ENCODE measurements at regions of chr6 and their contacts with region 1.

Region 1: DNA sequence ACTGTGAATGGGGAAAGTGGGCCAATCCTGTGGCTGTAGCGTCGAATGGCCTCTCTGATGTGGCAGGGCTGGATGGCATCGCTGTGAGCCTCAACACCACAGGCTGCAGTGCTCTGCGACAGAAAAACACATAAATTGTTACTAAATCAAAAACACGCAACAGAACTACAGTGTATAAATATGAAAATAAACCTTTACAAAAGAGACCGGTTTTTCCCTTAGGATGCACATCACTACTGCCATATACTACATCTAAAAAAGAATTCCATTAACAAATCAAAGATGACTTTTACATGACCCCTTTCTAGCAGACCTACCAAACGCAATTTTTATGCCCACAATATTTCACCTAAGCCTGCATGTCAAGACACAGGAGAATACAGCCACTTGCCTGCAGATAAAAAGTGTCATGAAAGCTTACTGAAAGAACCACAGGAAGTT is 395.5 kb upstream of the RUNX2 start:
- DNase-seq: no peak
- H3K4me3 Mint-ChIP-seq: peak overlapping the region; percentile 78
- H3K27ac Mint-ChIP-seq: peak overlapping the region; percentile 93
- H3K4me1 Mint-ChIP-seq: peaks cover 48% of the 10 kb centered on the region
- H3K27me3 Mint-ChIP-seq: no peaks in the 10 kb centered on the region

Region 2: GRCh38 chr6:44655412-44656342 is 277.0 kb before region 1 on chr6:
- intact Hi-C with region 1: loop called (anchors 10 kb)
- DNase-seq: peak; percentile 55
- H3K4me3 Mint-ChIP-seq: peak overlapping the region; percentile 53
- H3K27ac Mint-ChIP-seq: peak overlapping the region; percentile 89
- H3K4me1 Mint-ChIP-seq: peaks cover 12% of the 10 kb centered on the region
- H3K27me3 Mint-ChIP-seq: no peaks in the 10 kb centered on the region

Region 3: DNA sequence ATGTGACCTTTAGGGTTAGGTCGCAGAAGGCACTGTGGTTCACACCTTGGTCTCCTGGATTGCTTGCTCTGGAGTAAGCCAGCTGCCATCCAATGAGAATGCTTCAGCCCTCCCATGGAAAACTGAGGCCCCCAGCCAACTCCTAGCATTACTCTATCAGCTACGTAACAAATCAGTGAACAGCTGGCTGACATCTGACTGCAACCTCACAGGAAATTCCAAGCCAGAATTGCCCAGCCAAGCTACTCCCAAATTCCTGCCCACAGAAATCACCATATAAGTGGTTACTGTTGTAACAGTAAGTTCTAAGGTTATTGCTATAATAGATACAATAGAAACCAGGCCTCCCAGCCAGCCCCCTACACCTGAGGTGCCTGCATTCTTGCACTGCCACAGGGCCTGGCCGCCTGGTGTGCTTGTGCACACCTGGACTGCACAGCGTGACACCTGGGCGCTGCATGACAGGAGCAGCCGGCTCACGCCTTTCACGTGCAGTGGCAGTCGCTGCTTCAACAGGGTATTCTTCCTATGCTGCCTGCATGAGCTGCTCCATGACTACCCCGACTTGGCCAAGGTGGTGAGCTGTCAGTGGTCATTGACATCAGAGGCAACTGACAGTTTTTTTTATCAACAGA is 34.3 kb before region 1 on chr6:
- intact Hi-C with region 1: no loop called
- DNase-seq: no peak
- H3K4me3 Mint-ChIP-seq: no peak overlapping the region
- H3K27ac Mint-ChIP-seq: no peak overlapping the region
- H3K4me1 Mint-ChIP-seq: no peaks in the 10 kb centered on the region
- H3K27me3 Mint-ChIP-seq: no peaks in the 10 kb centered on the region

Region 4: GRCh38 chr6:44976719-44977641 is 44.3 kb after region 1 on chr6:
- intact Hi-C with region 1: loop called (anchors 2 kb)
- DNase-seq: no peak
- H3K4me3 Mint-ChIP-seq: no peak overlapping the region
- H3K27ac Mint-ChIP-seq: peak overlapping the region; percentile 84
- H3K4me1 Mint-ChIP-seq: peaks cover 44% of the 10 kb centered on the region
- H3K27me3 Mint-ChIP-seq: no peaks in the 10 kb centered on the region

Region 5: GRCh38 chr6:45021676-45022075 is 89.0 kb after region 1 on chr6:
- intact Hi-C with region 1: loop called (anchors 5 kb)
- DNase-seq: no peak
- H3K4me3 Mint-ChIP-seq: no peak overlapping the region
- H3K27ac Mint-ChIP-seq: no peak overlapping the region
- H3K4me1 Mint-ChIP-seq: peaks cover 18% of the 10 kb centered on the region
- H3K27me3 Mint-ChIP-seq: no peaks in the 10 kb centered on the region

Region 6: GRCh38 chr6:45076217-45076930 is 143.7 kb after region 1 on chr6:
- intact Hi-C with region 1: no loop called
- DNase-seq: no peak
- H3K4me3 Mint-ChIP-seq: no peak overlapping the region
- H3K27ac Mint-ChIP-seq: no peak overlapping the region
- H3K4me1 Mint-ChIP-seq: peaks cover 24% of the 10 kb centered on the region
- H3K27me3 Mint-ChIP-seq: no peaks in the 10 kb centered on the region

Region 7: DNA sequence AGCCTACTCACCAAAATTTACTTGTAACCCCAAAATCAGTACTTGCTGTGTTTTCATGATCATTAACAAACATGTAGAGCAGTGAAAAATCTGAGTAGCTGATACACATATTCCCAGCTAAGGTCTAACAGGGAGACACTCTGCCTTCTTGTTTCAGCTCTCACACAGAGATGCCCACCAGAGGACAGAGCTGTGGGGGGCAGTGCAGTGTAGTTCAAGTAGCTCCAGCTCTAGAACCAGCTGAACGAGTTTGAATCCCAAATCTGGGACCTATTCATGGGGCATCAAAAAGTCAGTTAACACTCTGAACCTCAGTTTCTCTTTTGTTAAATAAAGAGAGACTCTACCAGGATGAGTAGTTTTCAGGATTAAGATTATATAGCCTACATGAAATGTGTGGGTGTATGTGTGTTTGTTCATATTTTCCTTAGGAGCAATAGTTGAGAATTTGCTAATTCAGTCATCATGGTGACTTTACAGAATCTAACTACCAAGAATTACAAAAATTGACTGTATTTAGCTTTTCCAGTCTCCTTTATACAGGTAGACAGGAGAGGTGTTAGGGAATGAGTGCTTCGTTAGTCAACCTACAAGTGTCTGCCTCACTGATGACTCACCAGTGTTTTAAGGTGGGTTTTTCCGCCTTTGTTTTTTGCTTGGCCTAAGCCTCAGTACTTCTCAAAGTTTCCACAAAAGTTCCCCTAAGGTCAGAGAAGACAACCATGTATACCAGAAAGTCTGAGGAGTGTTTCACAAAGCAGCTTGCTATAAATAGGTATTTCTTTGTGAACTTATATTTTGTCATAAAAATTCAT is 231.5 kb after region 1 on chr6:
- intact Hi-C with region 1: loop called (anchors 5 kb)
- DNase-seq: no peak
- H3K4me3 Mint-ChIP-seq: no peak overlapping the region
- H3K27ac Mint-ChIP-seq: peak overlapping the region; percentile 81
- H3K4me1 Mint-ChIP-seq: peaks cover 46% of the 10 kb centered on the region
- H3K27me3 Mint-ChIP-seq: no peaks in the 10 kb centered on the region

Measured in activated T-helper 2 cell treated with anti-CD3 and anti-CD28 coated beads, Interferon-gamma antibody, Interleukin-2, Interleukin-4, amounts not matched to agents 10 μg/mL and 5 μg/mL and 100 μg/mL, durations not matched to agents 14 hours and 24 hours and 36 hours (primary cell).